Activated T-helper 1 cell treated with anti-CD3 and anti-CD28 coated beads, Interleukin-12 subunit alpha, Interleukin-12 subunit beta, Interleukin-2, Interleukin-4 antibody, amounts not matched to agents 30 ng/mL and 10 ng/mL and 1 ng/mL, durations not matched to agents 14 hours and 24 hours and 36 hours (primary cell): ENCODE measurements at regions of chr1 and their contacts with region 1.

Region 1: DNA sequence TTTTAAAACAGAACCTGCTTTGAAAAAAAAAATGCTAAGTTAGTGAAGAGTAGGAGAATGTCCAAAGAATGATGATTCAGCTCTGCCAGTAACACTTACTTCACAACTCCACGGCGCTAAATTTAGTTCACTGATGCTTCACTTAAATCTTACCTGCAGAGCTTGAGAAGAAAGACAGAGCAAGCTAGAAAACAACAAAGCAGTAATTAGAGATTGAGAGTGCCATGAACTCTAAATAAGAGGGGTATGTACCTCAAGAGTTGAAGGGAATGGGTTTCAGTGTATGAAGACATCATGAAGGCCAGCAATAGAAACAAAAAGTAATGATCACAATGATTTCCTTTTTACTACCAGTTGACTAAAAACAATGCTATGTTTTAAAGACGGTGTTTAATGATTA is 32.8 kb downstream of the EPRS1 start:
- DNase-seq: no peak
- H3K4me3 Mint-ChIP-seq: peak overlapping the region; percentile 62
- H3K27ac Mint-ChIP-seq: peak overlapping the region; percentile 86
- H3K4me1 Mint-ChIP-seq: peaks cover 45% of the 10 kb centered on the region
- H3K27me3 Mint-ChIP-seq: no peaks in the 10 kb centered on the region

Region 2: DNA sequence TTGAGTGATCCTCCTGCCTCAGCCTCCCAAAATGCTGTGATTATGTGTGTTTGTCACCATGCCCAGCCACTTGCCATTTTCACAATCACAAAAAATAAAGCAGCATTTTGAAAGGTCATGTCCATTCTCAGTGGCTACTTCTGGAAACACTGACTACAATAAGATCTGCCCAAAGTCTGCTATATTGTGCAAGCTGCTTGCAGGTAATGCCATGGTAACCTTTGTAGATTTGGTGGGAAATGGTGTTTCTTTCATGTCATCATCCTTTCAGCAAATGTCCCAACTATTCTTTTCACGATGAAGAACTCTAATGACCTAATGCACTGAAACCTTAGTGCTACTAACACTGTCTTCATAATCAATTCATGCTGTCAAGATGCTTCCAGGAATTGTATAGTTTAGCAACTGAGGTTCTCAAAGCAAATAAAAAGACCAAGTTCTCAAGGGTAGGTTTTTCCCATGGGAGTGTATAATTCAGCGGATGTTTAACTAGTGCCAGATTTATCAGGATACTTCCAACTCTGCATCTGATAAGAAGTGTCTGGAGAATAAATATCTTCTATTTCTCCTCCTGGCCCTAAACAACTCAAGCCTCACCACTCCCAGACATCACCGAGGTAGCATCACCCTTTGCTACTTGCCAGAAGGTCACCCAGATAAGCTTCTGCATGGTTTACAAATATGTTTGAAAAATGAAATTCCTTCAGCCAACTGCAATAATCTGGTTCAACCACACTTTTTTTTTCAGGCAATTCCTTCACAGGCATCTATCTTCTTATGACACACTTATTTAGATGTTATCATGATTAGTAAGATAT is 268.6 kb before region 1 on chr1:
- intact Hi-C with region 1: no loop called
- DNase-seq: no peak
- H3K4me3 Mint-ChIP-seq: no peak overlapping the region
- H3K27ac Mint-ChIP-seq: no peak overlapping the region
- H3K4me1 Mint-ChIP-seq: no peaks in the 10 kb centered on the region
- H3K27me3 Mint-ChIP-seq: no peaks in the 10 kb centered on the region

Region 3: DNA sequence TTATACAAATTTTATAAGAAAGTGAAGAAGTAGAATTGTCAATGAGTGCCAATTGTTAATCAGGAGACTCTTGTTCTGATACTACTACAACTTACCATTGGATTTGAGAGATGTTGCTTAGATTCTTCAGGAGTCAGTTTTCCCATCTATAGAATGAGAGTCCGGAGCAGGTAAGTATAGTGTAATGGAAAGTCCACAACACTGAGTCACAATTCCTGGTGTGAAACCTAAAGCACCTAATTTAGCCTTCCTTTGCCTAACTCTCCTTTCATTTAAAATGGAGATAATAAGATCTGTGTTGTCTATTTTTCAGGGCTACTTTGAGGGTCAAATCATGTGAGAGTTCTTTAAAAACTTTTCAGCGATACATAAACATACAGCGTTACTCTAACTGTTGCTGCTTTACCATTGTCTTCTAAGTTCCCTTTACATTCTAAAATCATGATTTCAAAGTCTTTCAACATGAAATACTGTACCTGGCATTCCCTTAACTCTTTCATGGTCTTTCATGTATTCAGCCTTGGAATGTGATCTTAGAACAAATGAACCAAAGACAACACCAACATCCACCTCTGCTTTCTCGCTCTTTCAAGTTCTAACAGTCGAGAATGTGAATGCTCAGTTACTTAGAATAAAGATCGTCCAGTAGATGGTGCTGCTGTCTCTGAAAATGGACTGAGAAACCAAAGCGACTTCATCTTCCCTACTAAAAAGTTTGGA is 176.1 kb before region 1 on chr1:
- intact Hi-C with region 1: no loop called
- DNase-seq: no peak
- H3K4me3 Mint-ChIP-seq: no peak overlapping the region
- H3K27ac Mint-ChIP-seq: no peak overlapping the region
- H3K4me1 Mint-ChIP-seq: no peaks in the 10 kb centered on the region
- H3K27me3 Mint-ChIP-seq: no peaks in the 10 kb centered on the region

Region 4: DNA sequence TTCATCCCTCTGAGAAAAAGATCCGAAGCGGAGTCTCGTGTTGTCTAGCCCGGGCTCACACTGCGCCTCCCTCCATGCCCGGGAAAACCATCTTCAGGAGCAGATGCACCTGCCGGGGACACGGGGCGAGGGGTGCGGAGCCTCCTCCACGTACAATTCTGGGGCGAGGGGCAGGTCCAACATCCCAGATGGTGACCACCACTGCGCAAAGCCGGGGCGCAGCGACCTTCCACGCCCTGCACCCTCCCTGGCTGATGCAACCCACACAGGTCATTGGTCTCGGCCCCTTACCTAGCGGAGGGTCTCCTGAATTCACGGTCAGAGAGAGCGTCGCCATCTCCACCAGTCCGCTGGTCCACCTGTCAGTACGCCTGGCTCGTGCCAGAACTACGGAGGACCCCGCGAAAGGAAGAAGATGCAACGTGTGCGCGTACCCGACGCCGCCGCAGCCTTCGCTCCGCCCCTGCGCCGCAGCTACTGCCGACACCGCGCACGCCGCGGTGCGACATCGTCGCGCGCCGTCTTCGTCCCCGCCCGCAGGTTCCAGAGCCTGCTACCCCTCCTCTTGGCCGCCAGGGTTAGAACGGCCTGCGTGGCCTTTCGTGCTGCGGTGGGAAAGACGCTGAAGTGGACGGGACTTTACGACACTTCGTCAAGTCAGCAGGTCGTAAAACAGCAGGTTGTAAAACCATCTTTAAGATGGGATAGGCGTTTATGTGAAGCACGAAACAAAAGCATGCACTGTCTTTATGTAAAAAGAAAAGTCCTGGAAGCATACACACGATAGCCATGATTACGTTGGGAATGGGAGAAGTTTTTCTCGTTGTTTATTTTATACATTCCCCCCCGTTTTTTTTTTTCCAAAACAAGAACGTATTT is 32.8 kb after region 1 on chr1 and contains the start of gene EPRS1:
- intact Hi-C with region 1: loop called (anchors 2 kb)
- DNase-seq: peak; percentile 95
- H3K4me3 Mint-ChIP-seq: peak within 1 kb of the TSS; percentile 96
- H3K27ac Mint-ChIP-seq: peak within 1 kb of the TSS; percentile 93
- H3K4me1 Mint-ChIP-seq: peaks cover 32% of the 10 kb centered on the region
- H3K27me3 Mint-ChIP-seq: no peaks in the 10 kb centered on the region
- total RNA-seq, gene EPRS1: 176 and 188 TPM in 2 replicates